HEK293 (cell line): ENCODE measurements at regions of chr17 and their contacts with region 1.

Region 1: DNA sequence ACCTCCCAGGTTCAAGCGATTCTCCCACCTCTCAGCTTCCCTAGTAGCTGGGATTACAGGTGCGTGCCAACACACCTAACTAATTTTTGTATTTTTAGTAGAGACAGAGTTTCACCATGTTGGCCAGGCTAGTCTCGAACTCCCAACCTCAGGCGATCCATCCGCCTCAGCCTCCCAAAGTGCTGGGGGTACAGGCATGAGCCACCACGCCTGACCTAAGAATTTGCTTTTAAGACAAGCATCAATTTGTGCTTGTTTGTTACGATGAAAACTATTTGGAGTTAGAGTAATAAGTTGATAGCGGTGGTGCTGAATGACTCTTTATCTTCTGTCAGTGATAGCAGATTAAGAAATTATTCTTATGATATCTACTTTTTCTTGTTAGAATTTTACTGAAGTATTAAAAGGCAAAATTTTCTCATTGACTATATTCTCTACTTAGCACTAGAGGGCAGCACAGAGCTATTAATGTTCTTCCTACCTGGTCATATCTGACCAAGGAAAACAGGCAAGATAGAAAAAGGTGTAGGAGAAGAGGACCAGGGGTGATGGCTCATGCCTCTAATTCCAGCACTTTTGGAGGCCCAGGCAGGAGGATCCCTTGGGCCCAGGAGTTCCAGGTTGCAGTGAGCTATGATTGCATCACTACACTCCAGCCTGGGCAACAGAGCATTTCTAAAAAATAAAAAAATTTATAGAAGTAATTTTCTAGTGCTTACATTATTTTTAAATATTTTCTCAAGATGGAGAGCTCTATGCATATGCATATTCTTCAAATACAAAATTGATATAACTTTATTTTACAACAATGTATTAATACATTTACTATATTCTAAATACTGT is 24.5 kb downstream of the STXBP4 start:
- H3K4me3 ChIP-seq: no peak overlapping the region
- H3K27ac ChIP-seq: no peak overlapping the region
- H3K4me1 ChIP-seq: no peaks in the 10 kb centered on the region
- CTCF ChIP-seq: no peak

Region 2: GRCh38 chr17:54968262-54968987 is 24.6 kb before region 1 on chr17 and contains the starts of genes COX11 and STXBP4:
- CTCF ChIA-PET with region 1: interaction called, 18 read pairs
- POLR2A ChIA-PET with region 1: no interaction called
- H3K4me3 ChIP-seq: peak within 1 kb of the TSS; percentile 87
- H3K27ac ChIP-seq: peak within 1 kb of the TSS; percentile 82
- H3K4me1 ChIP-seq: no peaks in the 10 kb centered on the region; the same call in 1 of the 2 replicates
- CTCF ChIP-seq: peak; percentile 86

Region 3: DNA sequence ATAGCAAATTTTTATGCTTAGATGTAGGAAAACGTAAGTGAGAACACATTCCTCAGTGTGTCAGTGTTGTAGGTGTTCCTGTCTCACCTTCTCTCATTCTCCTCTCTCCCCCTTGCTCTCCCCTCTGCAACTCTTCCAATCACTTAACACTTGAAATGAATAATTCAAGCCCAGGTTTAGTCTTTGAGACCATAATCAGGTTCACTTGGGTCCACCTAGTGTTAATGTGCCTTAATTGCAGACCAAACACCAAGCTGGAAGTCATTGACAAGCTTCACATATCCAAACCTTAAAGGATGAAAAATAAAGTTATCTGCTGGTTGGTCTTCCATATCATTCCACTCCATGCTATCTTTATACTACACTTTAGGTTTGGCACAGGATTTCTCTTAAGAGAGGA is 12.5 kb after region 1 on chr17:
- CTCF ChIA-PET with region 1: interaction called, 21 read pairs
- POLR2A ChIA-PET with region 1: no interaction called
- H3K4me3 ChIP-seq: no peak overlapping the region
- H3K27ac ChIP-seq: no peak overlapping the region
- H3K4me1 ChIP-seq: no peaks in the 10 kb centered on the region
- CTCF ChIP-seq: 0 out of 2 replicates have a peak, but pooled peaks have one; percentile 9

Region 4: DNA sequence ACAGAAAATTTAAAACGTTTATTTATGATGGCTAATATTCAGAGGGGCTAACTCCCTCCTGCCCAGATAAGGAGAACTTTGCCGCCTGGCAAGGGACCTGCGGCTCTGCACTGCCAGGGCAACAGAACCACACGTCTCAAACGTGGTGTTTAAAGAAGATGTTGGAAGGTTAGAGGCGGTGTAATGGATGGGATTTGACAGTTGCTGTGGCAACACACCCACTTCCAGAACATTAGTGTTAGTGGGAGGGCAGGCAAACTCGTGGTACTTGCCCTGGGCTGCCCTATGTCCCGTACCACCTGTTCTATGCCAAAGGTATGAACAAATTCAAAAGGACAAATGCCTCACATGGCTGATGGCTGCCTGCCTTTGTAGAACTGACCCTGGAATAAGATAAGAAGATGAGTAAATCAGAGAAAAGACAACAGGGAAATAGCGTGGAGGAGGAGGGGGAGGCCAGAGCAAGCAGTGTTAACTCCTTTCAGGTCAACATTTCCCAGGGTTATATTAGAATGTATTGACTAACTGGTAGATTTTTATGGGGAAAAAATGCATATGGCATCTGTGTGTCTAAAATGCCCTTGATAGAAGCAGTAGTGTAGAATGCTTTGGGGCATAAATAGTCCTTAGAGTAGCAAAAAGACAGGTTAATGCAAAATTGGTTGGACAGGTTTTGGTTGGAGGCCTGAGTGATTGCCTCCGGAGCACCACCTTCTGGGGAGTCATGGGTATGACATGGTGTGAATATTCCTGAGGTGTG is 302.6 kb after region 1 on chr17:
- CTCF ChIA-PET with region 1: interaction called, 23 read pairs
- POLR2A ChIA-PET with region 1: no interaction called
- H3K4me3 ChIP-seq: no peak overlapping the region
- H3K27ac ChIP-seq: no peak overlapping the region
- H3K4me1 ChIP-seq: no peaks in the 10 kb centered on the region
- CTCF ChIP-seq: no peak

Region 5: DNA sequence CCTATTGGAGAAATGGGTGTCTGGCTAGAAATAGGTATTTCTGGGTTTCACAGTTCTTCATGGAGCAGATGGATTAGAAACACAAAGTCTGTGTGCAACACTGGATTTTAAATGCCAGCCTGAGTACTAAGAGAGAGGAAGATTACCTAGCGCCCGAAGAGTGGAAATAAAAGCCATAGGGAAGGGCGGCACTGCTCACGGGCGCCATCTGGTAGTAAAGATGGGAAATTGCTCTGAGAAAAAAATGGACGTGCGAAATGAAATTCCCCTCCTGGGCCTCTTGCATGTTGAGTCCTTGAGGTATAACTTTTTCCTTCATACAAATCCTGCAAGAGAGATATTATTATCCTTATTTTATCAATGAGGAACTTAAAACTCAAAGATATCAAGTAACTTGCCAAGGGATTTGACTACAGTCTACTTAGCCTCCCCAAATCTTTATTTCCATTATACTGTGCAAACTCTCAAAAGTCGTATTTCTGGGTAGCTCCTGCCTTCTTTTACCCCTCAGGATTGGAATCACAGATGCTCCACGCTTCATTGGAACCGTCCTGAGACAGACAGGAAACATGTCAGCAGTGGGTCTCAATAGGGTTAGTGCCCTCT is 355.8 kb after region 1 on chr17:
- CTCF ChIA-PET with region 1: interaction called, 106 read pairs
- POLR2A ChIA-PET with region 1: no interaction called
- H3K4me3 ChIP-seq: no peak overlapping the region
- H3K27ac ChIP-seq: no peak overlapping the region
- H3K4me1 ChIP-seq: no peaks in the 10 kb centered on the region
- CTCF ChIP-seq: peak; percentile 63; the same call in 1 of the 2 replicates

Region 6: DNA sequence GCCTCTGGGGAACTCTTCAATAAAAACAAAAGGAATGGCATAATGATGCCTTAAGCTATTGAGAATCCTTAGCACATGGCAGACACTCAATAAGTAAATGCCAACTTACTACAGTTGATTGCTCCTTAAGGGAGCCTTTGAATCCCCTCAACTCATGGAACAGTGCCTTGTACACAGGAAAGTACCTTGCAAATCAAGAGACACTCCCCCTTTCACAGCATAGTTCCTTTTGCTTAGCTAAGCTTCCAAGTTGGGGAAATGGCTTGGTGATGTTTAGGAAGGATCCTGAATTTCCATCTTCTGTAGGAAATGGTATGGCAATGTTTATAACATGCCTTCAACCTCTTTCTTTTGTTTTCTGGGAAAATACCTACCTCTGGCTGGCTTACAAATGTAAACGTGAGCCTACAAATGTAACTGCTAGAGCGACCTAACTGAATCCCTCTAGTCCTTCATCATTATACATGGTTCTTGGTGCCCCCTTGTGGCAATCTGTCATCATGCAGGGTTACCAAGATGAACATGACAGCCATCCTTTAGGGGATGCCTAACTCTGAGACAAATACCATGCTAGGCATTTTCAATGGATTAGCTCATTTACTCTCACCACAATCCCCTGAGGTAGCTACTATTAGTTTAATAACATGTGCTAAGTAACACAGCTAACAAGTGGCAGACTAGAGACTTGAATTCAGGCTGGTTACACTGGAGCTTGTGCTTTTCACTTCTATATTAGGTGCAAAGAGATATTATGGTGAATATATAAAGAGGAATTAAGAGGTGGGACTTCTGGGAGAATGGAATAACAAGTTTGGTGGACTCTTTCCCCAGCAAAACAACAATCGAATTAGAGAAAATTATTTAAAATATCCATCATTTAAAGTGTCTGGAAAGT is 363.7 kb after region 1 on chr17:
- CTCF ChIA-PET with region 1: interaction called, 51 read pairs
- POLR2A ChIA-PET with region 1: no interaction called
- H3K4me3 ChIP-seq: no peak overlapping the region
- H3K27ac ChIP-seq: no peak overlapping the region
- H3K4me1 ChIP-seq: no peaks in the 10 kb centered on the region
- CTCF ChIP-seq: peak; percentile 26; the same call in 1 of the 2 replicates

Region 7: DNA sequence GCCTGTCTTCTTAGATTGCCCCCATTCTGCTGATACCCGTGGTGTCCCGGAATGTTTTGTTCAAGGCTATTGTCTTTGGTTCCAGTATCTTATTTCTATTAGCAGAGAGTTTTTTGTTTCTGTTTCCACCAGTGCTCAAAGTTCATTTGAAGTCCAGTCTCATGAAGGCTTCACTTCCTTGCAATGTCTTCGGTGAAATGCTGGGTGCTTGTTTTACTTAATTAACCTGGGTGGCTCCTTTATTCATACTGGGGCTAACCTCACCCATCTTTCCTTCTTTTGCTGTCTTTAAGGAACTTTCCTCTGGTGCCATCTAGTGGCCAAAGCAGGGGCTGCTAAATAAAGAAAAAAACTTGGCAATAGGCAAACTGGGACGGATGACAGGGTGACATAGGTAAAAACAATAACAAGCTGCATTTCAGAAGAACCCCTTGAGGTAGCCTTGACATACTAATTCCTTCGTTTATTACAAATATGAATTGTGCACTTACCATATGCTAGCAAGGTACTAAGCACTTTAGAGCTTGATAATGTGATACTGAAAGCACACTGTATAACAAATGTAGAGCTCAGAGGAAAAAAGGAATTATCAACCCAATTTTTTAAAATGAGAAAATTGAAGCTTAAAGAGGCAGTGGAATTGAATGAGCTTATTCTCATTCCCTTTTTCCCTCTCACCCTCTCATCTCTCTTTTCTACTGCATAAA is 521.0 kb after region 1 on chr17:
- CTCF ChIA-PET with region 1: interaction called, 17 read pairs
- POLR2A ChIA-PET with region 1: no interaction called
- H3K4me3 ChIP-seq: no peak overlapping the region
- H3K27ac ChIP-seq: no peak overlapping the region
- H3K4me1 ChIP-seq: no peaks in the 10 kb centered on the region
- CTCF ChIP-seq: peak; percentile 65